Cardiac septum (tissue), 1 donor: ENCODE measurements at regions of chr14 and their contacts with region 1.

Region 1: GRCh38 chr14:104768437-104769323 is 15.7 kb downstream of the SIVA1 start:
- DNase-seq: peak; percentile 95

Region 2: DNA sequence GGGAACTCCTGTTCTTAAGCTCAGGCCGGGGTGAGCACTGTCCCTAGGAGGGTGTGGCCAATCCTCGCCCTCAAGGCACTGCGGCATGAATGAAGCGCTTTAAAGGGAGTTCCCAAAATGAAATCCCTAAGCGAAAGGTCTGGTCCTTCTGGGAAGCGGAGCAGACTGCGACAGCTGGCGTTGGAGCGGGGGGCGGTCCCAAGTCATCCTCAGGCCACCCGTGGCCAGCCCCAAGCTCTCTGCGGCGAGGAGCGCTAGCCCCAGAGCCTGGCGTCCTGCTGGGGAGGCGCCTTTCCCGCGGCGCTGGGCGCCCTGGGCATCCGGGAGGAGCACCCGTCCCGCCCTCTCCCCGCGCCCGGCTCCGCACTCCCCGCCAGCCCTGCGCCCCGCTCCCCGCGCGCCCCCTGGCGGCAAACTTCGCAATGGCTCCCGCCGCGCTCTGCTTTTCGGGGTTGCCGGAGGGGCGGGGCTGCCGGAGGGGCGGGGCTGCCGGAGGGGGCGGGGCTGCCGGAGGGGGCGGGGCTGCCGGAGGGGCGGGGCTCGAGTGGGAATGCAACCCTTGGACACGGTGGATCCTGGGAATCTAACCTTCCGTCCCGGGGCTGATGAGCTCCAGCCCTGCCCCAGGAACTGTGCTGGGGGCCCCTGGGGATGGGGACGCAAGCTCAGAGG is 57.6 kb after region 1 on chr14:
- intact Hi-C with region 1: loop called (anchors 1 kb)
- DNase-seq: peak; percentile 97

Region 3: GRCh38 chr14:105045710-105046326 is 277.1 kb after region 1 on chr14:
- intact Hi-C with region 1: loop called (anchors 10 kb)
- DNase-seq: peak; percentile 96